Activated CD8-positive, alpha-beta T cell treated with anti-CD3 and anti-CD28 coated beads, Interleukin-2, amount 10 ng/mL, durations not matched to agents 7 days and 5 days (primary cell): ENCODE measurements at regions of chr15 and their contacts with region 1.

Region 1: GRCh38 chr15:34209421-34210282 is at the start of gene KATNBL1:
- DNase-seq: peak; percentile 98
- ATAC-seq: peak; percentile 96
- H3K4me3 Mint-ChIP-seq: peak within 1 kb of the TSS; percentile 93
- H3K27ac Mint-ChIP-seq: peak within 1 kb of the TSS; percentile 90
- H3K4me1 Mint-ChIP-seq: peaks cover 17% of the 10 kb centered on the region
- H3K27me3 Mint-ChIP-seq: peaks cover 3% of the 10 kb centered on the region
- total RNA-seq, gene KATNBL1: 40.5 to 44.5 TPM

Region 2: DNA sequence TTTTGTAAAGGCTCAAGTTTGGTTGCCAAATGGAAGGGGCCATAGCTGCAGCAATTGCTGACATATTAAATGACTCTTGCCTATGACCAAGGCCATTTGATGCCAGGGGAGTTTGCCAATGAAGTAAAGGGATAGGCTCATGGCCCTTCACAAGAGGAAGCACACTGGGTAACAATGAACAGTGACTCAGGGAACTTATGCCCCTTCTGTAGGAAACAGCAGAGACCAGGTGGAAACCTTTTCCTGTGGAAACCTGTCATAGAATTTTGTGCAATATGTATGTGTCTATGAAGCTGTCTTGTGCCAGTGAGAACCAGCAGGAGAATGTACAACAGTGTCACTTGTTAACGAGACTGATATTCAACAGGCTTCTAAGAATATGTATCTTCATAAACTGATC is 145.2 kb before region 1 on chr15:
- CTCF ChIA-PET with region 1: interaction called, 80 read pairs
- POLR2A ChIA-PET with region 1: interaction called, 8 read pairs
- DNase-seq: no peak
- ATAC-seq: no peak
- H3K4me3 Mint-ChIP-seq: no peak overlapping the region
- H3K27ac Mint-ChIP-seq: no peak overlapping the region
- H3K4me1 Mint-ChIP-seq: peaks cover 24% of the 10 kb centered on the region
- H3K27me3 Mint-ChIP-seq: peaks cover 4% of the 10 kb centered on the region

Region 3: GRCh38 chr15:34101366-34102175 is 108.1 kb before region 1 on chr15 and contains the starts of genes EMC7 and PGBD4:
- CTCF ChIA-PET with region 1: interaction called, 11 read pairs
- POLR2A ChIA-PET with region 1: interaction called, 19 read pairs
- DNase-seq: peak; percentile 99
- ATAC-seq: peak; percentile 99
- H3K4me3 Mint-ChIP-seq: peak within 1 kb of the TSS; percentile 99
- H3K27ac Mint-ChIP-seq: peak within 1 kb of the TSS; percentile 97
- H3K4me1 Mint-ChIP-seq: peaks cover 28% of the 10 kb centered on the region
- H3K27me3 Mint-ChIP-seq: no peaks in the 10 kb centered on the region
- total RNA-seq, gene EMC7: 54.3 to 58.4 TPM
- total RNA-seq, gene PGBD4: 2.8 to 2.9 TPM

Region 4: DNA sequence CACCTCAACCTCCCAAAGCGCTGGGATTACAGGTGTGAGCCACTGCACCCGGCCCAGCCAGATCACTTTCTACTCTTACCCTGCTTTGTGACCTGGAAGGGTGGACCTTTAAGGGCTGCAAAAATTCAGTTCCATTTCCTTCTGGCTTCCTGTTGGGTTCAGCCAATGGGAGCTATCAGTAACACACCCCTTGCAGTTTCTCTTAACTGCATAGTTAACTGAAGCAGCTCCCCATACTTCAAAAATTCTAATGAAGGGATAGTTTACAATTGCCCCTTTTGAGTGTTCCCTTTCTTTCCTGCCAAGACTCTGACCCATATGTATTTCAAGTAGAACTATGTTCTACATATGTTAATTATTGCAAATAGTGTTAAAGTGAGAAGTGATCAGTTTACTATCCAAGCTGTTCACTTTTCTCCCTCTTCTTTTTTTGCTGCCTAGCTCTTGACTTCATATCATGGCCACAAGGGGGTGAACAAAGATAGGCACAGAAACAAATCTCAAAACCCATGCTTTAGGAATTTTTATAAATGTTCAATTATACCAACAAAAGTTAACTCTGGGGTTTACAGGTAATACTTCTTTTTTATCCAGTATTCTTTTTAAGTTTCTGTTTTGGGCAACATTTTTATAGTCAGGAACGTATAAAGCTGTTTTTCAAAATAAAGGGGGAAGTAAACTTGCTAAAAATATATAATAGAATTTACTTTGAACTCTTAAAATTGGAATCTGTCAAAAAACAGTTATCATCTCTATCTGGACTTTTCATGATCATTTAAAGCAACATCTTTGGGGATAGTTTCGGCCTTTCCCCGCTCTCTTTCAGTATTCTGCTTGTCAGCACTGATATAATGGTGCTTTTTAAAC is 99.6 kb before region 1 on chr15:
- CTCF ChIA-PET with region 1: interaction called, 51 read pairs
- POLR2A ChIA-PET with region 1: interaction called, 5 read pairs
- DNase-seq: no peak
- ATAC-seq: peak; percentile 51
- H3K4me3 Mint-ChIP-seq: no peak overlapping the region
- H3K27ac Mint-ChIP-seq: no peak overlapping the region
- H3K4me1 Mint-ChIP-seq: peaks cover 4% of the 10 kb centered on the region
- H3K27me3 Mint-ChIP-seq: peaks cover 5% of the 10 kb centered on the region

Region 5: GRCh38 chr15:34182942-34183341 is 26.7 kb before region 1 on chr15:
- CTCF ChIA-PET with region 1: no interaction called
- POLR2A ChIA-PET with region 1: no interaction called
- DNase-seq: no peak
- ATAC-seq: no peak
- H3K4me3 Mint-ChIP-seq: no peak overlapping the region
- H3K27ac Mint-ChIP-seq: no peak overlapping the region
- H3K4me1 Mint-ChIP-seq: no peaks in the 10 kb centered on the region
- H3K27me3 Mint-ChIP-seq: no peaks in the 10 kb centered on the region

Region 6: DNA sequence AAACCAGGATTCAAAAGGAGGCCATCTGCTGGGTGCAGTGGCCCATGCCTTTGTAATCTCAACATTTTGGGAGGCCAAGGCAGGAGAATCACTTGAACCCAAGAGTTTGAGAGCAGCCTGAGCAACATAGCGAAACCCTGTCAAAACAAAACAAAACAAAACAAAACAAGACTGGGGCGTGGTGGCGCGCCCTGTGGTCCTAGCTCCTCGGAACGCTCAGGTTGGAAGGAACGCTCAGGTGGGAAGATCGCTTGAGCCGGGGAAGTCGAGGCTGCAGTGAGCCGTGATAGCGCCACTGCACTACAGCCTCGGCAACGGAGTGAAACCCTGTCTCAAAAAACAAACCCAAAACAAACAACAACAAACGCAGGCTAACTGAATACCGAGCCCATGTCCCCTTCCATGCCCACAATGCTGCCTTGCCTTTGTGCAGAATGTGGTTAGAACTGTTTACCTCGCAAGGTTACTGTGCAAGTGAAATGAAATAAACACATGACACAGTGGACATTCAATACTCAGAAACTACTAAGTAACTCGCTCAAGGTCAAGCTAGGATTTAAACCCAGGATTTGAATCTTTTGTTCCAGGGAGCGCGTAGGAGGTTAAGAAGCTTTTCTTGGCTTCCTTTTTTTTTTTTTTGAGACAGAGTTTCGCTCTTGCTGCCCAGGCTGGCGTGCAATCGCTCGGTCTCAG is 14.4 kb after region 1 on chr15:
- CTCF ChIA-PET with region 1: interaction called, 16 read pairs
- POLR2A ChIA-PET with region 1: interaction called, 11 read pairs
- DNase-seq: no peak
- ATAC-seq: peak; percentile 10
- H3K4me3 Mint-ChIP-seq: peak overlapping the region; percentile 97
- H3K27ac Mint-ChIP-seq: peak overlapping the region; percentile 92
- H3K4me1 Mint-ChIP-seq: peaks cover 31% of the 10 kb centered on the region
- H3K27me3 Mint-ChIP-seq: no peaks in the 10 kb centered on the region